Breast epithelium (tissue), 4 donors: ENCODE measurements at regions of chr2 and their contacts with region 1.

Region 1: GRCh38 chr2:84212611-84213314 is 246.3 kb downstream of the SUCLG1 start:
- DNase-seq: no peak
- H3K4me3 ChIP-seq: no peak overlapping the region
- H3K27ac ChIP-seq: no peak overlapping the region
- H3K4me1 ChIP-seq: no peaks in the 10 kb centered on the region
- H3K27me3 ChIP-seq: no peaks in the 10 kb centered on the region
- CTCF ChIP-seq: no peak
- POLR2A ChIP-seq: no peak

Region 2: GRCh38 chr2:85318222-85319074 is 1105.7 kb after region 1 on chr2:
- intact Hi-C with region 1: loop called (anchors 10 kb)
- DNase-seq: no peak
- H3K4me3 ChIP-seq: no peak overlapping the region
- H3K27ac ChIP-seq: peak overlapping the region in 1 of 2 donors; percentile 26
- H3K4me1 ChIP-seq: no peaks in the 10 kb centered on the region
- H3K27me3 ChIP-seq: no peaks in the 10 kb centered on the region
- CTCF ChIP-seq: no peak
- POLR2A ChIP-seq: no peak